Heart left ventricle (tissue), 16 donors: ENCODE measurements at regions of chr12 and their contacts with region 1.

Region 1: GRCh38 chr12:45343269-45344051 is 127.6 kb downstream of the ANO6 start:
- DNase-seq: peak in 3 of 5 donors; percentile 29 to 65 (median 53)
- ATAC-seq: peak; percentile 75 to 91 (median 88)
- H3K4me3 ChIP-seq: no peak overlapping the region
- H3K27ac ChIP-seq: peak overlapping the region in 8 of 12 donors; percentile 3 to 45 (median 22)
- H3K4me1 ChIP-seq: peaks cover 0 to 25% (median 10%) of the 10 kb centered on the region in 12 donors
- H3K27me3 ChIP-seq: no peaks in the 10 kb centered on the region
- CTCF ChIP-seq: no peak
- POLR2A ChIP-seq: no peak

Region 2: DNA sequence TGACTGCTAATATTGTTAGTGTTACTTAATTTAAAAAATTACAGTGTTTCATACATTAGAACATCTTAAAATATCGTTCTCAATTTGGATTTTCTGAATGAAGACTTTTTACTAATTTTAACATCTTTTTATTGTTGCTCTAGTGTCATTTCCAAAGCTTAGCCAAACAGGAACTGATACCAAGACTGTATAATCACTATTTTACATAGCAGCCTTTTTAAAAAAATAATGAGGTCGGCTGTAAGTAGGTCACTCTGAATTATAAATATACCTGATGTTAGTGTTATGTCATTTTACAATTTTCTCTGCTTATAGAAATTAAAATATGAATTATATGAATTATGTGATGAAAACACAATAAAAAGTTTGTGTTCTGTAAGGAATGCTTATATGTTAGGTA is 1186.1 kb before region 1 on chr12:
- intact Hi-C with region 1: no loop called
- DNase-seq: no peak
- ATAC-seq: no peak
- H3K4me3 ChIP-seq: no peak overlapping the region
- H3K27ac ChIP-seq: no peak overlapping the region
- H3K4me1 ChIP-seq: peaks cover 0 to 35% (median 9%) of the 10 kb centered on the region in 12 donors
- H3K27me3 ChIP-seq: no peaks in the 10 kb centered on the region
- CTCF ChIP-seq: no peak
- POLR2A ChIP-seq: no peak

Region 3: DNA sequence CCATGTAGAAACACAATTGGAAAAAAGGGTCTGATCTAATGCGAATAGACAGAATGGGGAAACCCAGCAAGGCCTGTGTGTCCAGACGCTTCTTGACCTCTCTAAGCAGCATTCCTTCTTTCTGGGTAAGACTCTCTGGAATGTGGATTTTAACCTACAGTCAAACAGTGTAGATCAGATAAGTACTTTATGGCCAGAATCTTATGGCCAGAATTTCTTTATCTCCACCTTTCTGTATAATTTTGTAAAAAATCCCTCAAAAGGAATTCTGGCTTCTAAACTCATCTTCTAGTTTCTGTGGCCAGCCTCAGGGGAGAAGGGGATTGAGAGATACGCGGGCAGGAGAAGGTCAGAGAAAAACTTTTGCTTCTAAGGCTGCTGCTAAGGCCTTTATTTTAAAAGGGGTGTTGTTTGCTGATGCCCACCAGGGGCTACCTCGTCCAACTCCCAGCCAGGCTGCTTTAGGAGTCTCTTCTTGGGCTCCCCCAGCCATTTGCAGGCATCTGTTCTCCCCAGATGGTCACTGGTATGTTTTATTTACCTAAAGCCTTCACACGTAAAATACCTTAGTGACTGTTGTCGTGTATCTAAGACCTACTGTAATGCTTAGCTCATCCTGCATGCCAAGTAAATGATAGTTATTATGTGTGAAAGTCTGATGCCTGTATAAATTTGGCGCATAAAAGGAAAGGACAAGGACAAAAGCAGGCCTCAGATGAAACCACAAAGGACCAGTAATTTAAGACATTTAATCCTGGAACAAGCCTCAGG is 59.1 kb before region 1 on chr12:
- intact Hi-C with region 1: loop called in 2 of 10 experiments (anchors 10 kb)
- DNase-seq: no peak
- ATAC-seq: no peak
- H3K4me3 ChIP-seq: no peak overlapping the region
- H3K27ac ChIP-seq: peak overlapping the region in 1 of 12 donors; percentile 53
- H3K4me1 ChIP-seq: peaks cover 4 to 50% (median 15%) of the 10 kb centered on the region in 12 donors
- H3K27me3 ChIP-seq: no peaks in the 10 kb centered on the region
- CTCF ChIP-seq: no peak
- POLR2A ChIP-seq: no peak